ENCODE measurements at regions of chr12 and their contacts with region 1.

Region 1: GRCh38 chr12:12486661-12487240 is 75.9 kb downstream of the DUSP16 start:
- DNase-seq: peak; percentile 57
- ATAC-seq: peak; percentile 93
- H3K4me3 ChIP-seq: no peak overlapping the region
- H3K27ac ChIP-seq: peak overlapping the region; percentile 58
- H3K4me1 ChIP-seq: peaks cover 19% of the 10 kb centered on the region
- H3K27me3 ChIP-seq: no peaks in the 10 kb centered on the region
- CTCF ChIP-seq: no peak
- EP300 ChIP-seq: peak; percentile 96 to 98
- POLR2A ChIP-seq: no peak
- RAD21 ChIP-seq: no peak

Region 2: GRCh38 chr12:12138203-12139154 is 348.3 kb before region 1 on chr12:
- CTCF ChIA-PET with region 1: no interaction called
- POLR2A ChIA-PET with region 1: no interaction called
- RAD21 ChIA-PET with region 1: no interaction called
- SMC1A ChIA-PET with region 1: no interaction called
- in situ Hi-C with region 1: no loop called
- intact Hi-C with region 1: no loop called
- DNase-seq: no peak
- ATAC-seq: no peak
- H3K4me3 ChIP-seq: no peak overlapping the region
- H3K27ac ChIP-seq: no peak overlapping the region
- H3K4me1 ChIP-seq: no peaks in the 10 kb centered on the region
- H3K27me3 ChIP-seq: no peaks in the 10 kb centered on the region
- CTCF ChIP-seq: no peak
- EP300 ChIP-seq: no peak
- POLR2A ChIP-seq: no peak
- RAD21 ChIP-seq: no peak

Region 3: GRCh38 chr12:12384571-12385340 is 102.0 kb before region 1 on chr12:
- CTCF ChIA-PET with region 1: interaction called, 4 read pairs
- POLR2A ChIA-PET with region 1: interaction called, 3 read pairs
- RAD21 ChIA-PET with region 1: interaction called, 8 read pairs
- SMC1A ChIA-PET with region 1: interaction called, 12 read pairs
- in situ Hi-C with region 1: no loop called
- intact Hi-C with region 1: no loop called
- DNase-seq: no peak
- ATAC-seq: peak; percentile 88
- H3K4me3 ChIP-seq: no peak overlapping the region
- H3K27ac ChIP-seq: no peak overlapping the region
- H3K4me1 ChIP-seq: peaks cover 7% of the 10 kb centered on the region
- H3K27me3 ChIP-seq: no peaks in the 10 kb centered on the region
- CTCF ChIP-seq: no peak
- EP300 ChIP-seq: 0 out of 4 replicates have a peak, but pooled peaks of 1 of the 2 experiments have one; percentile 11
- POLR2A ChIP-seq: no peak
- RAD21 ChIP-seq: no peak

Region 4: DNA sequence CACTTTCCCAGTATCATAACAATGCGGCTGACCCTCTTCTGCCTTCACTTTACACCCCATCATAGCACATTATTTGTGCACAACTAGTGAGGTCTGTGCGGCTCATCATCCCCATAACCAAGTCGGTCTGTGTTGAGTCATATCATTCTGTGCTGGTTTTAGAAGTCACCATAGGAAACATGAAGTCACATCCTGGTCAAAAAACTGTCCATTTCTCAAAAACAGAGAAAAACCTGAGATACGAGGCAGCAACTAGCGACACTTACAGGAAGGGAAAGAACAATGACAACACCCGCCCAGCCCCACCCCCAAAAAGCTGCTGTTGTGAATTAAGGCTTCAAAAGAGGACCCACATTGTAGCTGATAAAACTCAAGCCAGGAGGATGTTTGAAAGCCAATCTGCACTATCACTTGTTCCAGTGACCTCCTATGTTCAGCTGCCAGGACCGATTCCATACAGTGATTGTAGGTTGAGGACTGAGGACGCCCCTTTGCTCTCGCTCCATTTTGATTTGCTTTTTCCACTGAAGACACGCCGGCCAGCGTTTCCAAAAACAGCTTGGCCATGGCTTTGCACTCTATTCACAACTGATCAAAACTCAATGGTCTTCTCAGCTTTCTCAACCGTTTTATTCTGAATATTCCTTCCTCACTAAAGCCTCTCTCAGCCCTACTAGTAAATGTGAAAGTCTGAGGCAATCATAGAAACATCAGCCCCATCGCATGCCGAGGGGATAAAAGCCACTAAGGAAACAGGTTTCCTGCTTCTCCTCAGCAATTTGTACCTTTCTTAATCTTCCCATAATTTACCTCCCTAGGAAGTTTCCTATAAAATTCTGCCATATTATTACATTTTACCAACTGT is 11.6 kb before region 1 on chr12:
- CTCF ChIA-PET with region 1: interaction called, 23 read pairs
- POLR2A ChIA-PET with region 1: interaction called, 26 read pairs
- RAD21 ChIA-PET with region 1: interaction called, 30 read pairs
- SMC1A ChIA-PET with region 1: interaction called, 52 read pairs
- in situ Hi-C with region 1: no loop called
- intact Hi-C with region 1: no loop called
- DNase-seq: peak; percentile 87
- ATAC-seq: peak; percentile 98
- H3K4me3 ChIP-seq: 0 out of 2 replicates have a peak overlapping the region, but pooled peaks have one; percentile 30
- H3K27ac ChIP-seq: peak overlapping the region; percentile 94
- H3K4me1 ChIP-seq: peaks cover 24% of the 10 kb centered on the region
- H3K27me3 ChIP-seq: no peaks in the 10 kb centered on the region
- CTCF ChIP-seq: peak in 1 of 3 experiments; percentile 19; a peak in 1 of 6 replicates
- EP300 ChIP-seq: peak; percentile 82 to 88; a peak in 3 of 4 replicates
- POLR2A ChIP-seq: no peak
- RAD21 ChIP-seq: peak; percentile 61

Region 5: DNA sequence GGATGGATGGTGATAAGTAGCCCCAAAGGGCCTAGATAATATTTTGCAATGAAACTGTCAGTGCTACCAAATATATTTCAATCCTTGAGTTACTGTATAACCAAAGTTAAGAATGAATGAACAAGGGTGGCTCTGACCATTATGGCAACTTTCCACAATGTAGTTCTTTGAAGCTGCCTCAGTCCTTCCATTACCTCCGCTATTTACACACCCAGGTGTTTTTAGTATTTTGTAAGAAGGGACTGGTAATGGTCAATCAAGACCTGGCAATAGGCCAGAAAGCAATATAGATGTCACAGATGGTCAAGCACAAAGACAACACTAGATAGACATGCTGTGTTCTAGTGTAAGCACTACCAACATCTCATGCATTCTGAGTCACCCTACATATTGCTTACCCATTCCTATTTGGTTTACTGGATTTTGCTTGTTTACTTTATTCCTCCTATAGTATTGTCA is 59.6 kb after region 1 on chr12:
- CTCF ChIA-PET with region 1: no interaction called
- POLR2A ChIA-PET with region 1: interaction called, 4 read pairs
- RAD21 ChIA-PET with region 1: interaction called, 11 read pairs
- SMC1A ChIA-PET with region 1: interaction called, 3 read pairs
- in situ Hi-C with region 1: no loop called
- intact Hi-C with region 1: no loop called
- DNase-seq: no peak
- ATAC-seq: peak; percentile 9; the same call in 1 of the 3 replicates
- H3K4me3 ChIP-seq: no peak overlapping the region
- H3K27ac ChIP-seq: no peak overlapping the region
- H3K4me1 ChIP-seq: peaks cover 10% of the 10 kb centered on the region; the same call in 1 of the 2 replicates
- H3K27me3 ChIP-seq: no peaks in the 10 kb centered on the region
- CTCF ChIP-seq: no peak
- EP300 ChIP-seq: no peak
- POLR2A ChIP-seq: no peak
- RAD21 ChIP-seq: no peak

Region 6: DNA sequence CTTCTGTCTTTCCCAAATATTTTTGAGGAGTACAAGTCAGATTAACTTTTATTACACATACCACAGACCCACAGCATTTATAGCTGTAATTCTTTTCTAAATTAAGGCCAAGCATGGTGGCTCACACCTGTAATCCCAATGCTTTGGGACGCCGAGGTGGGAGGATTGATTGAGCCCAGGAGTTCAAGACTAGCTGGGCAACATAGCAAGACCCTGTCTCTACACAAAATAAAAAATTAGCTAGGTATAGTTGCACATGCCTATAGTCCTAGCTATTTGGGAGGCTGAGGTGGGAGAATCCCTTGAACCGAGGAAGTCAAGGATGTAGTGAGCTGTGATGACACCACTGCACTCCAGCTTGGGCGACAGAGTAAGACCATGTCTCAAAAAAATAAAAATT is 68.9 kb after region 1 on chr12:
- CTCF ChIA-PET with region 1: interaction called, 5 read pairs
- POLR2A ChIA-PET with region 1: interaction called, 9 read pairs
- RAD21 ChIA-PET with region 1: interaction called, 8 read pairs
- SMC1A ChIA-PET with region 1: interaction called, 10 read pairs
- in situ Hi-C with region 1: no loop called
- intact Hi-C with region 1: no loop called
- DNase-seq: no peak
- ATAC-seq: no peak
- H3K4me3 ChIP-seq: no peak overlapping the region
- H3K27ac ChIP-seq: no peak overlapping the region
- H3K4me1 ChIP-seq: peaks cover 16% of the 10 kb centered on the region
- H3K27me3 ChIP-seq: no peaks in the 10 kb centered on the region
- CTCF ChIP-seq: no peak
- EP300 ChIP-seq: no peak
- POLR2A ChIP-seq: no peak
- RAD21 ChIP-seq: no peak

Measured in GM12878 (cell line).